Heart right ventricle (tissue), 16 donors: ENCODE measurements at regions of chr12 and their contacts with region 1.

Region 1: DNA sequence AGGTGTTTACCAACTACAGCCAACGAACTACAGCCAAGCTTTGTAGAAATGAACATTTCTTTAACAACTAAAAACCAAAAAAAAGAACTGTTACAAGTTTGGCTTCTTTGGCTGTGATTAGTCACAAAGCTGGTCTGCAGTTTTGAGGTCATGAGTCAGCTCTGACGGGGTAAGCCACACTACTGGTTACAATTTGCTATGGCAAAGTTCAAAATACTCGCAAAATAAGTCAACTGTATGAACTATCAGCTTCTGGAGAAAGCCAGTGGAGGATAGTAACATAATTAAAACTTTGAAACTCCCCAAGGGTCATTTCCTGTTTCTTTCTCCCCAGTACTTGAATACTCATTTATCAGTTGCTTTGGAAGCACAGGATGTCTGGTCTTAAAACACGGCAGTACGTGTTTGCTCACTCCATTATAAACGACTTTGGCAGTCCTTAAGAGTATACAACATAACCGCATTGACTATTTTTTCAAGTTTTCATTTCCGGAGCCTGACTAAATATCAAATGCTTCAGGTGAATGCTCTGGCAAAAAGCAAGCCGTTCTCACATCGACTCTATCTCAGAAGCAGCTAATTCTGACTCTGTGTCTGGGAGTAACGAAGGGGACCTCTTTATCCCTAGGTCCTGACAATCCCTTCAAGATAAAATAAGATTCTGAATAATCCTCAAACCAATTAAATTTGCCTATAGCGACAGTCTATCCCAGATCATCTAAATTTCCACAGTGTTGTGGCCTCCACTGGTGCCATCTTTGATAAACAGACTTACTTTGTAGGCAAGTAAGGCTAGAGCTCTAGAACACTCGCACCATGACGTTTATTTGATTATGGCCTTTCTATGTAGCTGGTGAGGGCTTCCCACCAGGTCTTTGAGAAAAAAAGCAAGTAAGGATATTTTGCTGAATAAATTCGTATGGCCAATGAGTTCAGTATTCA is 10.6 kb downstream of the PHLDA1 start:
- DNase-seq: no peak
- ATAC-seq: peak in 3 of 8 donors; percentile 23 to 61 (median 57)
- H3K4me3 ChIP-seq: no peak overlapping the region
- H3K27ac ChIP-seq: peak overlapping the region in 8 of 10 donors; percentile 1 to 83 (median 28)
- H3K4me1 ChIP-seq: peaks cover 0 to 49% (median 6%) of the 10 kb centered on the region in 9 donors
- H3K27me3 ChIP-seq: no peaks in the 10 kb centered on the region
- CTCF ChIP-seq: no peak

Region 2: GRCh38 chr12:75712252-75712651 is 308.8 kb before region 1 on chr12:
- intact Hi-C with region 1: loop called in 1 of 10 experiments (anchors 10 kb)
- DNase-seq: no peak
- ATAC-seq: no peak
- H3K4me3 ChIP-seq: no peak overlapping the region
- H3K27ac ChIP-seq: no peak overlapping the region
- H3K4me1 ChIP-seq: peaks cover 0 to 55% (median 26%) of the 10 kb centered on the region in 9 donors
- H3K27me3 ChIP-seq: no peaks in the 10 kb centered on the region
- CTCF ChIP-seq: no peak

Region 3: GRCh38 chr12:75814851-75815754 is 205.9 kb before region 1 on chr12:
- intact Hi-C with region 1: loop called in 1 of 10 experiments (anchors 10 kb)
- DNase-seq: peak in 1 of 2 donors; percentile 55
- ATAC-seq: peak; percentile 65 to 95 (median 94)
- H3K4me3 ChIP-seq: no peak overlapping the region
- H3K27ac ChIP-seq: peak overlapping the region in 8 of 10 donors; percentile 31 to 70 (median 52)
- H3K4me1 ChIP-seq: peaks cover 0 to 24% (median 11%) of the 10 kb centered on the region in 9 donors
- H3K27me3 ChIP-seq: no peaks in the 10 kb centered on the region
- CTCF ChIP-seq: no peak

Region 4: GRCh38 chr12:75908961-75909605 is 111.9 kb before region 1 on chr12:
- intact Hi-C with region 1: loop called in 1 of 10 experiments (anchors 10 kb)
- DNase-seq: peak; percentile 66 to 85
- ATAC-seq: peak; percentile 76 to 85 (median 84)
- H3K4me3 ChIP-seq: no peak overlapping the region
- H3K27ac ChIP-seq: peak overlapping the region in 9 of 10 donors; percentile 1 to 74 (median 61)
- H3K4me1 ChIP-seq: peaks cover 3 to 44% (median 25%) of the 10 kb centered on the region in 9 donors
- H3K27me3 ChIP-seq: no peaks in the 10 kb centered on the region
- CTCF ChIP-seq: no peak

Region 5: GRCh38 chr12:75933101-75933500 is 87.9 kb before region 1 on chr12:
- intact Hi-C with region 1: loop called in 2 of 10 experiments (anchors 5 to 10 kb)
- DNase-seq: no peak
- ATAC-seq: peak in 1 of 8 donors; percentile 43
- H3K4me3 ChIP-seq: no peak overlapping the region
- H3K27ac ChIP-seq: peak overlapping the region in 3 of 10 donors; percentile 1 to 15 (median 4)
- H3K4me1 ChIP-seq: peaks cover 0 to 35% (median 25%) of the 10 kb centered on the region in 9 donors
- H3K27me3 ChIP-seq: peaks cover 0 to 28% (median 0%) of the 10 kb centered on the region in 7 donors
- CTCF ChIP-seq: no peak

Region 6: DNA sequence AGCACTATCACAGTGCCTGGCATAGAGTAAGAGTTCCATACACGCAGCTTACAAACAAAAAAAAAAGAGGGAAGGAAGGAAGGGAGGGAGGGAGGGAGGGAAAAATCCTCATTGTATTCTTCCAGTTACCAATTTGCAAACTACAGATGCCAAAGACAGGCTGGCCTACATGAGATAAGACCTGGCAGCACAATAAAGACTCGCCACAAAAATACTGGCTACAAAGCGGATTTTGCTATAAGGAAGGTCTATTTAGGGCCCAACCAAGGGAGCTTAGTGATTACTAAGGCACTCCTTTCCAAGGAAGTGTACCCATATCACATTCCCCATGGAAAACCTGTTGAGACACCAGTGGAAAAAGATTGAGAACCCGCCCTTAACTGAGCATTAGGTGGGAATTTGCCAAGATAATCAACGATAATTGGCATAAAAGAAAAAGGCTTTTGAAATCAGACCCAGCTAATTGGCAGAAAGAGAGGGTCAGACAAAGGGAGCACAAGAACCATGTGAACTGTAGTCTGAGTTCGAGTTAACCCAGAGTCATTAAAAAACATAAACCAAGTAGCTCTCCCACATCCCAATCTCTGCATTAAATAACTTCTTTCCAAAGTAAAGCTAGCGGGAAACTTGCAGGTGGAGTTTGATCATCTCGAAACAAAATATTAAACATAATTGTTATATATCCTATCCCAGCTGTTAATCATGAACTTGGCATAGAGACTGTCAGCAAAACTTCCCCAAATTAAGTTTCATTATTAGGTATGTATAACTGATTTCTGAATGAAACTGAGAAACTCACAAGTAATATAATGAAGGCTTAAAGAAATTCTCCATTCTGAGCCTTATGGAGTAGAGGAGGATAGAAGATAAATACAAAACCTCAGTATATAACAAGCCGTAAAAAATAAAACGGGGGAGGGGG is 39.5 kb before region 1 on chr12:
- intact Hi-C with region 1: loop called in 2 of 10 experiments (anchors 5 kb)
- DNase-seq: no peak
- ATAC-seq: no peak
- H3K4me3 ChIP-seq: no peak overlapping the region
- H3K27ac ChIP-seq: peak overlapping the region in 7 of 10 donors; percentile 15 to 62 (median 54)
- H3K4me1 ChIP-seq: peaks cover 6 to 58% (median 32%) of the 10 kb centered on the region in 9 donors
- H3K27me3 ChIP-seq: no peaks in the 10 kb centered on the region
- CTCF ChIP-seq: no peak